ENCODE measurements at regions of chr11 and their contacts with region 1.

Region 1: GRCh38 chr11:71564430-71564829 is 933 bp upstream of the KRTAP5-10 start:
- DNase-seq: no peak
- ATAC-seq: no peak
- H3K4me3 ChIP-seq: no peak overlapping the region
- H3K4me3 Mint-ChIP-seq: no peak overlapping the region
- H3K27ac ChIP-seq: no peak overlapping the region
- H3K27ac Mint-ChIP-seq: no peak overlapping the region
- H3K4me1 ChIP-seq: no peaks in the 10 kb centered on the region
- H3K4me1 Mint-ChIP-seq: no peaks in the 10 kb centered on the region
- H3K27me3 ChIP-seq: peaks cover 0 to 4% of the 10 kb centered on the region in 2 experiments
- H3K27me3 Mint-ChIP-seq: peaks cover 40% of the 10 kb centered on the region
- CTCF ChIP-seq: no peak

Region 2: GRCh38 chr11:71465054-71465453 is 99.4 kb before region 1 on chr11:
- CTCF ChIA-PET with region 1: no interaction called
- POLR2A ChIA-PET with region 1: no interaction called
- intact Hi-C with region 1: no loop called
- DNase-seq: no peak
- ATAC-seq: no peak
- H3K4me3 ChIP-seq: no peak overlapping the region
- H3K4me3 Mint-ChIP-seq: no peak overlapping the region
- H3K27ac ChIP-seq: no peak overlapping the region
- H3K27ac Mint-ChIP-seq: no peak overlapping the region
- H3K4me1 ChIP-seq: no peaks in the 10 kb centered on the region
- H3K4me1 Mint-ChIP-seq: peaks cover 1% of the 10 kb centered on the region
- H3K27me3 ChIP-seq: no peaks in the 10 kb centered on the region
- H3K27me3 Mint-ChIP-seq: no peaks in the 10 kb centered on the region
- CTCF ChIP-seq: no peak

Region 3: DNA sequence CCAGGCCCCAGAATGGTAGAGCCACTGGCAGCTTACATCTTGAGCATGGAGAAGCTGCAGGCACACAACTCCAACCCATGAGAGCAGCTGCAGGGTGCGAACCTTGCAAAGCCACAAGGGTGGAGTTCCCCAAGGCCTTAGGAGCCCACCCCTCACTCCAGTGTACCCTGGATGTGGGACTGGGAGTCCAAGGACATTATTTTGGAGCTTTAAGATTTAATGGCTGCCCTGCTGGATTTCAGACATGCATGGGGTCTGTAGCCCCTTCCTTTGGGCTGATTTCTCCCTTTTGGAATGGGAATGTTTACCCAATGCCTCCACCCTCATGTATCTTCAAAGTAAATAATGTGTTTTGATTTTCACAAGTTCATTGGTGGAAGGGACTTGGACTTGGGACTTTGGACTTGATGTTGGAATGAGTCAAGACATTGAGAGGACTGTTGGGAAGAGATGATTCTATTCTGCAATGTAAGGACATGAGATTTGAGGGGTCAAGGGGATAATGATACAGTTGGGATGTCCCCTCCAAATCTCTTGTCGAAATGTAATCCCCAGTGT is 38.4 kb before region 1 on chr11:
- CTCF ChIA-PET with region 1: no interaction called
- POLR2A ChIA-PET with region 1: no interaction called
- intact Hi-C with region 1: loop called in 1 of 2 experiments (anchors 2 kb)
- DNase-seq: peak in 1 of 9 experiments; percentile 17
- ATAC-seq: no peak
- H3K4me3 ChIP-seq: no peak overlapping the region
- H3K4me3 Mint-ChIP-seq: no peak overlapping the region
- H3K27ac ChIP-seq: no peak overlapping the region
- H3K27ac Mint-ChIP-seq: no peak overlapping the region
- H3K4me1 ChIP-seq: no peaks in the 10 kb centered on the region
- H3K4me1 Mint-ChIP-seq: no peaks in the 10 kb centered on the region
- H3K27me3 ChIP-seq: no peaks in the 10 kb centered on the region
- H3K27me3 Mint-ChIP-seq: peaks cover 20% of the 10 kb centered on the region
- CTCF ChIP-seq: no peak

Region 4: GRCh38 chr11:71580057-71581003 is 15.9 kb after region 1 on chr11:
- CTCF ChIA-PET with region 1: no interaction called
- POLR2A ChIA-PET with region 1: no interaction called
- intact Hi-C with region 1: no loop called
- DNase-seq: peak in 3 of 9 experiments; percentile 18 to 33 (median 21)
- ATAC-seq: no peak
- H3K4me3 ChIP-seq: no peak overlapping the region
- H3K4me3 Mint-ChIP-seq: no peak overlapping the region
- H3K27ac ChIP-seq: no peak overlapping the region
- H3K27ac Mint-ChIP-seq: no peak overlapping the region
- H3K4me1 ChIP-seq: no peaks in the 10 kb centered on the region
- H3K4me1 Mint-ChIP-seq: peaks cover 2% of the 10 kb centered on the region
- H3K27me3 ChIP-seq: no peaks in the 10 kb centered on the region
- H3K27me3 Mint-ChIP-seq: peaks cover 25% of the 10 kb centered on the region
- CTCF ChIP-seq: peak; percentile 71